ENCODE measurements at regions of chr5 and their contacts with region 1.

Region 1: GRCh38 chr5:90783460-90784333 is 225.1 kb downstream of the ADGRV1 start:
- DNase-seq: peak; percentile 68
- H3K4me3 ChIP-seq: no peak overlapping the region
- H3K27ac ChIP-seq: no peak overlapping the region
- H3K4me1 ChIP-seq: no peaks in the 10 kb centered on the region
- H3K27me3 ChIP-seq: peaks cover 0 to 2% of the 10 kb centered on the region in 2 experiments
- CTCF ChIP-seq: peak; percentile 67 to 79
- POLR2A ChIP-seq: no peak

Region 2: DNA sequence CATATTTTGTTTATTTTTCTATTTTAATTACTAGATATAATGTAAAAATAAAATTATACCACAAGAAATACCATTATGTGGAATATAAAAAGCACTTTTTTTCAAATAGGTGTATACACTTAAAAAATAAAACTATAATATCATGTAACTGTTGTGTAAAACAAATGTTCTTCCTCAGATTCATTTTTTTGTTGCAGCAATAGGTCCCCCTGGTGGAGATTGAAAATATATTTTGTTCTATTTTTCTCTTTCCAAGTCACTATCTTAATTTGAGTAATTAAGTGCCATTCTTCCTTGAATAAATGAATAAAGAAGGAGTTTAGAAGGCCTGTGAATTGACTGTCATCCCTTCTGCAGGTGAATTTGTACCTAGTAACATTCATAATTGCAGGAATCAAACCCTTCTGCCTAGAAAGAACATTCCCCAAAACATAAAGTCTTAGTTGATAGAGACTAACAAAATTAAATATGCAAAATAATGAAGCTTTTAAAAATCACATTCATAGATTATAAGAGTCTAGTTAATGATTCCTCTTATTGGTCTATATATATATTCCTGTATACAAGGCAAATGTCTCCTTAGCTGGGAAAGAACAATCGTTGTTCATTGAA is 397.5 kb before region 1 on chr5:
- CTCF ChIA-PET with region 1: interaction called, 8 read pairs
- POLR2A ChIA-PET with region 1: no interaction called
- dilution Hi-C with region 1: no loop called
- intact Hi-C with region 1: loop called (anchors 5 kb)
- DNase-seq: peak; percentile 36
- H3K4me3 ChIP-seq: no peak overlapping the region
- H3K27ac ChIP-seq: no peak overlapping the region
- H3K4me1 ChIP-seq: no peaks in the 10 kb centered on the region
- H3K27me3 ChIP-seq: no peaks in the 10 kb centered on the region
- CTCF ChIP-seq: peak; percentile 20 to 29
- POLR2A ChIP-seq: no peak

Region 3: GRCh38 chr5:90440644-90441043 is 343.1 kb before region 1 on chr5:
- CTCF ChIA-PET with region 1: interaction called, 67 read pairs
- POLR2A ChIA-PET with region 1: no interaction called
- dilution Hi-C with region 1: no loop called
- intact Hi-C with region 1: loop called (anchors 1 kb)
- DNase-seq: no peak
- H3K4me3 ChIP-seq: no peak overlapping the region
- H3K27ac ChIP-seq: no peak overlapping the region
- H3K4me1 ChIP-seq: no peaks in the 10 kb centered on the region
- H3K27me3 ChIP-seq: peaks cover 0 to 5% of the 10 kb centered on the region in 2 experiments
- CTCF ChIP-seq: no peak
- POLR2A ChIP-seq: no peak

Region 4: DNA sequence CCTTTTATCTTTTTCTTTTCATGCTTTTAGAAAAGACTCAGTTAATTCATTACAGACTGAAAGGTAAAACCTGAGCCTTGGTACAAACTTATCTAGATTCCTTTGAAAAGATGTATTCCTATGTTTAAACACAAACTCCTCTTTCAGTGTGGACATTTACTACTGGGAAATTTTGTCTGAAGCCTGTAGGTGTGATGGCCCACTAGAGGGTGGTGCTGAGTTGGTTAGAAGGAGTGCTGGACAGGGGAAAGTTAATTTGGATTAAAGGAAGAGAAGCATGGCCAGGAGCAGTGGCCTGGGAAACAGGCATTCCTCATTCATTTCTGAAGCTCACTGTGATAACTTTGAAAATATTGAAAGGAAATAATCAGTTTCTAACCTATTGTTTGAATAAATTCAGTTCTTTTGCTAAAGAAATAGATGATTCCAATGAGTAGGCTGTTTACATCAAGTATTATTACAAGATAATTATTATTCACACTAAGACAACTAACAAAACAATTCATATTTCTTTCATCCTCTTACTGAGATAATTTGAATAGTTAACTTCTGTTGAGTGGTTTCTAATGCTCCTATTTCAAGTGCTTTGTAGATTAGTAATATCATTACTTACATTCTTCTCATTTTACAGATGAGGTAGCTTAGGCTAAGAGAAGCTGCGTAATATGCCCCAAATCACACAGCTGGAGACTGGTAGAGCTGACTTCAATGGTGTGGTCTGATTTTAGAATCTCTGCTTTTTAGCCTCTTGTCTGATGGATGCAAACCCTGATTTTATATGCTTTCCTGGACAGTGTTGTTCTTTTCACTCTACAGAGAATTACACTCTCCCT is 74.2 kb before region 1 on chr5:
- CTCF ChIA-PET with region 1: interaction called, 18 read pairs
- POLR2A ChIA-PET with region 1: no interaction called
- dilution Hi-C with region 1: no loop called
- intact Hi-C with region 1: loop called (anchors 1 kb)
- DNase-seq: peak; percentile 46
- H3K4me3 ChIP-seq: no peak overlapping the region
- H3K27ac ChIP-seq: no peak overlapping the region
- H3K4me1 ChIP-seq: no peaks in the 10 kb centered on the region
- H3K27me3 ChIP-seq: peaks cover 0 to 4% of the 10 kb centered on the region in 2 experiments
- CTCF ChIP-seq: peak; percentile 61 to 66
- POLR2A ChIP-seq: no peak